ENCODE measurements at regions of chr10 and their contacts with region 1.

Region 1: DNA sequence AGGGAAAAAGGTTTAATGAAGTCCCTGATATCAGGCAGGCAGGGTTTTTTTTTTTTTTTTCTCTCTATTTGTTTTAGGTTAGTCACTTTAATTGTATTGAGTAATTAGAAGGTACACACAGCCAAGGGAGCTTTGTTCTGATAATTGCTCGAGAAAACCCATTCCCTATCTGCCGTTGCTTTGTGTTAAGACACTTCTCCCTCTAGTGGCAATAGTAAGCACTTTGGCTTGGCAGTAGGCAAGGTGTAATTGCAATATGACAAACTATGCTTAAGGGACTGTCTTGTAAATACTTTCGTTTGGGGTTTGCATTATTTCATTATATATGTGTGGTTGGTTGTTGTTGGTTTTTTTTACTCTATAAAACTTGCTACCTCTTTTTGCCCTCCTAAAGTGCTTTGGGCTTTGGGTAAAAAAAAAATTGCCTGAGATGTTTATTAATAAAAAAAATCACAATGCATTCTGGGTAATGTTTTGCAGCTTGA is 113.4 kb downstream of the BTRC start:
- DNase-seq: no peak
- ATAC-seq: peak; percentile 68 to 84

Region 2: GRCh38 chr10:101214446-101215396 is 252.6 kb before region 1 on chr10:
- intact Hi-C with region 1: loop called in 1 of 2 experiments (anchors 10 kb)
- DNase-seq: peak; percentile 72
- ATAC-seq: peak; percentile 78 to 86

Region 3: GRCh38 chr10:101297901-101298486 is 169.3 kb before region 1 on chr10:
- intact Hi-C with region 1: loop called in 1 of 2 experiments (anchors 10 kb)
- DNase-seq: peak; percentile 66
- ATAC-seq: peak; percentile 66 to 72

Region 4: DNA sequence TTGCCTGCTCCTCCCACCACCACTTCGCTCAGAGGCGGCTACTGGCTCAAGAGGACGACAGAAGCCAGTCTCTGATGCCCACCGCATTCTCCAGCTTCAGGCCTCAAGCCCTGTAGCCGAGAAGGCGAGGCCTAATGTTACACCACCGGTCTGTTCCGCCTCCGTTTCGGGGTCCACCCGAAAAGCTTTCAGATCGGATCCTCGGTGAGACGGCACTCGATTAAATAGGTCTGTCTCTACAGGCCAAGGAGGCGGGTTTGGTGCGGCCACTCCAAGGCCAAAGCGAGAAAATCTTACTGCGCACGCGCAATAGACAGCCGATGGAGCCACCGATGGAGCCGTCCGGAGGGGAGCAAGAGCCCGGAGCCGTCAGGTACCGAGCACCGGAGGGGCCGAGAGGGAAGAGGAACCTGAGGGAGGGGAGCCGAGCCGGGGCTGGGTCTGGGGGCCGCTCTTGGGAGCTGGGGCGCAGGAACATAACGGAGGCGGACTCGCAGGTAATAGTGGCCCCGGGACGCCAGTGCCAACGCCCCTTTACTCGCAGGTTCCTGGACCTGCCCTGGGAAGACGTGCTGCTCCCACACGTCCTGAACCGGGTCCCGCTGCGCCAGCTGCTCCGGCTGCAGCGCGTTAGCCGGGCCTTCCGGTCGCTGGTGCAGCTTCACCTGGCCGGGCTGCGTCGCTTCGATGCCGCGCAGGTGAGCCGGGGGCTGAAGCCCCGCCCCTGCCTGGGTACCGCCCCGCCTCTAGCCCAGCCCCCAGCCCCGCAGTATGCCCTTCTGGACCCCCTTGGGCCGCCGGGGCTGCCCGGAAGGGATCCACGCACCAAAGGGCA is 953.7 kb after region 1 on chr10 and contains the start of gene FBXL15:
- intact Hi-C with region 1: no loop called
- DNase-seq: peak; percentile 98
- ATAC-seq: peak; percentile 88
- total RNA-seq, gene FBXL15: 13.1 to 14.0 TPM

Measured in left cardiac atrium (tissue), 4 donors.